ENCODE measurements at regions of chr20 and their contacts with region 1.

Region 1: DNA sequence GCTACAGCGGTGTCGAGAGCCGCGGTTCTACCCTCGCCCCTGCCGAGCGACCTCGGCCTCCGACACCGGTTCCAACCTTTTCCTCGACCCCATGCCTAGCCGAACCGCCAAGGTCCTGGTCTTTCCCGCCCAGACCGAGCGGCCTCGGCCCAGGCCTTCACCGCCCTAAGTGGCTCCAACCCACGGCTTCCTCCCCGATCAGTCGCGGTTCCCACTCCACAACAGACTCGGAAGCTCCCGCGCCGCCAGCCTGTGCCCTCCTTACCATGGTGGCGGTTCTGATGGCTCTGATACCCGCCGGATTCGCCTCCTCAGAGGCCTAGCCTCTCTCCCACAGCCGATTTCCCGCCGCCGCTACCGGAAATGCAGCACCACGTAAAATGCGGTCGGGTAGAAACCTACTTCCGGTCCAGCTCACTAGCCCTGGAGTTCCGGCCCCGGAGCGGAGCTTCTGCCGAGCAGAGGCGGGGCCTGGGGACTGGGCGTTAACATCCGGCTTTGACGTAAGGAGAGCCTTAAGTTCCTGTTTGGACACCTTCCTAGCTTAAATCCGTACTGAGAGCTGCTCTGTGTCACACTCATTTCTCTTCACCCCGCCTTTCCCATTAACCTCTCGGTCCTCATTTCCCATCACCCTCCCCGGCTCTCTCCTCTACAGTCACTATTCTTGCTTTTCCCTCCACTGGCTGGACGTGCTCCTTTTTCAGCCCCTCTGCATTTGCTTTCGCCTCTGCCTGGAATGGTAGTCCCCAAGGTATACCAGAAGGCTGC is at the start of gene SNRPB:
- DNase-seq: peak; percentile 93 to 99 (median 97)
- ATAC-seq: peak; percentile 93
- H3K4me3 ChIP-seq: peak within 1 kb of the TSS; percentile 76 to 99
- H3K4me3 Mint-ChIP-seq: peak within 1 kb of the TSS; percentile 99
- H3K27ac ChIP-seq: peak within 1 kb of the TSS; percentile 95 to 99
- H3K27ac Mint-ChIP-seq: peak within 1 kb of the TSS; percentile 98
- H3K4me1 ChIP-seq: peaks cover 21% of the 10 kb centered on the region
- H3K4me1 Mint-ChIP-seq: peaks cover 44% of the 10 kb centered on the region
- H3K27me3 ChIP-seq: no peaks in the 10 kb centered on the region
- H3K27me3 Mint-ChIP-seq: no peaks in the 10 kb centered on the region
- CTCF ChIP-seq: no peak
- total RNA-seq, gene SNRPB: 176 to 180 TPM

Region 2: DNA sequence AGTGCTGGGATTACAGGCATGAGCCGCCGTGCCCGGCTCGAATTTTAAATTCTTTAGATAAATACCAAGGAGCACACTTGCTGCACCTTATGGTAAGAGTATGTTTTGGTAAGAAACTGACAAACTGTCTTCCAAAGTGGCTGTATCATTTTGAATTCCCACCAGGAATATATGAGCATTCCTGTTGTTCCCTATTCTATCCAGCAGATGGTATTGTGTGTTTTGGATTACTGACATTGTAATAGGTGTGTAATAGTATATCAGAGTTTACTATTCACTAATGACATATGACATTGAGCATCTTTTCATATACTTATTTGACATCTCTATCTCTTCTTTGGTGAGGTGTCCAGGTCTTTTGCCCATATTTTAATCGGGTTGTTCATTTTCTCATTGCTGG is 49.4 kb before region 1 on chr20:
- CTCF ChIA-PET with region 1: no interaction called
- POLR2A ChIA-PET with region 1: no interaction called
- intact Hi-C with region 1: no loop called
- DNase-seq: no peak
- ATAC-seq: no peak
- H3K4me3 ChIP-seq: no peak overlapping the region
- H3K4me3 Mint-ChIP-seq: no peak overlapping the region
- H3K27ac ChIP-seq: no peak overlapping the region
- H3K27ac Mint-ChIP-seq: no peak overlapping the region
- H3K4me1 ChIP-seq: no peaks in the 10 kb centered on the region
- H3K4me1 Mint-ChIP-seq: no peaks in the 10 kb centered on the region
- H3K27me3 ChIP-seq: no peaks in the 10 kb centered on the region
- H3K27me3 Mint-ChIP-seq: peaks cover 16% of the 10 kb centered on the region
- CTCF ChIP-seq: no peak

Region 3: GRCh38 chr20:2508631-2509467 is 38.2 kb after region 1 on chr20 and contains the start of gene ZNF343:
- CTCF ChIA-PET with region 1: interaction called, 4 read pairs
- POLR2A ChIA-PET with region 1: interaction called, 12 read pairs
- intact Hi-C with region 1: loop called (anchors 1 kb)
- DNase-seq: peak; percentile 52 to 89 (median 75)
- ATAC-seq: peak; percentile 93
- H3K4me3 ChIP-seq: peak within 1 kb of the TSS; percentile 85 to 95
- H3K4me3 Mint-ChIP-seq: peak within 1 kb of the TSS; percentile 96
- H3K27ac ChIP-seq: peak within 1 kb of the TSS; percentile 30 to 80
- H3K27ac Mint-ChIP-seq: peak within 1 kb of the TSS; percentile 94
- H3K4me1 ChIP-seq: peaks cover 13% of the 10 kb centered on the region
- H3K4me1 Mint-ChIP-seq: peaks cover 29% of the 10 kb centered on the region
- H3K27me3 ChIP-seq: no peaks in the 10 kb centered on the region
- H3K27me3 Mint-ChIP-seq: peaks cover 8% of the 10 kb centered on the region
- CTCF ChIP-seq: no peak
- total RNA-seq, gene ZNF343: 3.9 to 4.9 TPM

Region 4: DNA sequence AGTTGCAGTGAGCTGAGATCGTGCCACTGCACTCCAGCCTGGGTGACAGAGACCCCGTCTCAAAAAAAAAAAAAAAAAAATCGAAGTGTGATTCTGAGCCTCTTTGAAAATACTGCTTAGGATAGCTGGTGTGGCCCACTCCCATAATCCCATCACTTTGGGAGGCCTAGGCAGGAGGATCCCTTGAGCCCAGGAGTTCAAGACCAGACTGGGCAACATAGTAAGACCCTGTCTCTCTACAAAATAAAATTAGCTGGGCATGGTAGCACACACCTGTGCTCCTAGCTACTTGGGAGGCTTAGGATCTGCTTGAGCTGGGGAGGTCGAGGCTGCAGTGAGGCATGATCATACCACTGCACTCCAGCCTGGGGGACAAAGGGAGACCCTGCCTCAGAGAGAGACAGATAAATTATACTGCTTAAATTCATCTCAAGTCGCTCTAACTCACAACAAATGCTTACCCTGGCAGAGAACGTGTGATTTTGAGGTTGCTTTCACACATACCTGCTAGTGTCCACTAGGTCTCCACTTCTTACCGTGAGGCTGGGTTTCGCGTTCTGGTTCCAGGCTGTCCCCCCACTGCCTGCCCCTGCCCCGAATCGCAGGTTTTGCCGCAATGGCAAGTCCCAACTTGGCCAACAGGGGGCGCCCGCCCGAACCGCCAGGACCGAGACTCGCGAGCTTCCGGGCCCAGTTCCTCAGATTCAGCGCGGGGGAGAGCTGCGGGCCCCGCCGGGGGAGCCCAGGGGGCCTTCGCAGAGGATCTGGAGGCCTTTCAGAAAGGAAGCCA is 53.5 kb after region 1 on chr20:
- CTCF ChIA-PET with region 1: interaction called, 9 read pairs
- POLR2A ChIA-PET with region 1: interaction called, 4 read pairs
- intact Hi-C with region 1: loop called in 1 of 2 experiments (anchors 1 kb)
- DNase-seq: peak; percentile 86 to 97 (median 91)
- ATAC-seq: peak; percentile 84
- H3K4me3 ChIP-seq: peak overlapping the region; percentile 90 to 91
- H3K4me3 Mint-ChIP-seq: peak overlapping the region; percentile 89
- H3K27ac ChIP-seq: peak overlapping the region; percentile 47 to 58
- H3K27ac Mint-ChIP-seq: peak overlapping the region; percentile 60
- H3K4me1 ChIP-seq: peaks cover 10% of the 10 kb centered on the region
- H3K4me1 Mint-ChIP-seq: peaks cover 12% of the 10 kb centered on the region
- H3K27me3 ChIP-seq: no peaks in the 10 kb centered on the region
- H3K27me3 Mint-ChIP-seq: no peaks in the 10 kb centered on the region
- CTCF ChIP-seq: peak; percentile 92

Region 5: GRCh38 chr20:2663887-2664719 is 193.5 kb after region 1 on chr20 and contains the start of gene IDH3B:
- CTCF ChIA-PET with region 1: no interaction called
- POLR2A ChIA-PET with region 1: interaction called, 7 read pairs
- intact Hi-C with region 1: loop called in 1 of 2 experiments (anchors 1 kb)
- DNase-seq: peak; percentile 80 to 95 (median 93)
- ATAC-seq: peak; percentile 98
- H3K4me3 ChIP-seq: peak within 1 kb of the TSS; percentile 74 to 83
- H3K4me3 Mint-ChIP-seq: peak within 1 kb of the TSS; percentile 94
- H3K27ac ChIP-seq: peak within 1 kb of the TSS; percentile 82 to 95
- H3K27ac Mint-ChIP-seq: peak within 1 kb of the TSS; percentile 97
- H3K4me1 ChIP-seq: peaks cover 12% of the 10 kb centered on the region
- H3K4me1 Mint-ChIP-seq: peaks cover 20% of the 10 kb centered on the region
- H3K27me3 ChIP-seq: no peaks in the 10 kb centered on the region
- H3K27me3 Mint-ChIP-seq: peaks cover 7% of the 10 kb centered on the region
- CTCF ChIP-seq: no peak
- total RNA-seq, gene IDH3B: 174 to 184 TPM

Measured in CD8-positive, alpha-beta T cell (primary cell).